SK-N-SH (cell line): ENCODE measurements at regions of chr2 and their contacts with region 1.

Region 1: GRCh38 chr2:236525411-236525997 is 44.1 kb upstream of the ACKR3 start:
- DNase-seq: no peak
- H3K4me3 ChIP-seq: no peak overlapping the region
- H3K27ac ChIP-seq: no peak overlapping the region
- H3K4me1 ChIP-seq: no peaks in the 10 kb centered on the region
- H3K27me3 ChIP-seq: peaks cover 5% of the 10 kb centered on the region
- CTCF ChIP-seq: no peak
- EP300 ChIP-seq: no peak
- RAD21 ChIP-seq: no peak

Region 2: DNA sequence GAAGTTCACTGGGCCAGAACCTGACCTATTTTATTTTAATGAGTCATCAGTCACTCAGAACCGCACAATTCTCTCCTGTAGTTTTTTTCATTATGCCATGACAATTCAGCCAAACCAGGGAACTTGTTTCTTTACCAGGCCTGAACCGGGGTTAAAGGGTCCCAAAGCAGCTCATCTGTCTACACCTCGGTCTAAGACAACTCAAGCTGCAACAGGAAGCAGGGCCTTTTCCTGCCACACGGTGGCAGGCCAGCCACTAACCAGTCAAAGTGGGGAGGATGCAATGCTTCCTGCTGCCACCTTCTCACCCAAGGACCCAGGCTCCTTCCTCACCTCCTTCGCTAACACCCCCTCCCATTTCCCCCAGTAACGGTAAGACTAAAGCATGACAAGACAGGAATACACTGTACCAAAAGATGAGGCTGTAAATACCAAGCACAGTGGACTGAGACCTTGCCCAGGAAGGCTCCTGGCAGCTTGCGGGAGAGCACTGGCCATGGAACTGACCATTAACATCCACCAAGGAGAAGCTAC is 12.5 kb before region 1 on chr2:
- CTCF ChIA-PET with region 1: interaction called, 13 read pairs
- POLR2A ChIA-PET with region 1: no interaction called
- DNase-seq: peak; percentile 72
- H3K4me3 ChIP-seq: no peak overlapping the region; a peak in 1 of 4 replicates
- H3K27ac ChIP-seq: no peak overlapping the region
- H3K4me1 ChIP-seq: no peaks in the 10 kb centered on the region
- H3K27me3 ChIP-seq: no peaks in the 10 kb centered on the region; the same call in 1 of the 2 replicates
- CTCF ChIP-seq: peak; percentile 61
- EP300 ChIP-seq: no peak
- RAD21 ChIP-seq: peak; percentile 66